HepG2 (cell line): ENCODE measurements at regions of chr17 and their contacts with region 1.

Region 1: DNA sequence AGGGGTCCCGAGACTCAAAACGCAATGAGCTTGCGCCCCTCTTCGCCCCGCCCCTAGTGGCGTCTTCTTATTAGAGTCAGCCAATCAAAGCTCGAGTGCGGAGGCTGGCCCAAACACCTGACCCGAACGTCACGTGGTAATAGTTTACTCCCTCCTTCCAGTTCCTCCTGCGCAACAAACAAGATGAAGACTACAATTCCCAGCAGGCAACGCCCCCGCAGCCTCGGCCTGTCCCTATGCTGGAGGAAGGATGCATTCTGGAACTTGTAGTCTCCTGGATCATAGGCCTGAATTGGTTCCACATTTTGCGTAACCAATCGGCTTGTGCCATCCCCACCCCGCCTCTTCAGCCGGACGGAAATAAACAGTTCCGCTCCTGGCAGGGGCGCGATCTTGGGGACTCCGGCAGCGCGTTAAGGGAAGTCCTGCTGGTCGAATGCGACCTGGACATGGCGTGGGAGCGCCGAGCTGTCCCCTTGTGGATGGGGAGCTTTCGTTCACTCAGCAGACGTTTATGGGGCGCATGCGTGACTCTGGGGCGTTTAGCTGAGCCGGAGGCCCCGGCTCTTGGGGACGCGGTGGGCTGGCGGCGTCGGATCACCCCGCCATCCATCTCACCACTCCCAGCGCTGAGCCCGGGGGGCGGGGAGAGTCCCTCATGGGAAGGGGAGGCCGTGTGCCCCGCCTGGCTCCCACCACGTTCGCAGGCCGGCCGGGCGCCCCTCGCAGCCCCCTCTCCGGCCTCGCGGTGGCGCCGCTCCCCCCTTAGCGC is at the start of gene WBP2:
- DNase-seq: peak; percentile 100
- ATAC-seq: peak; percentile 92
- H3K4me3 ChIP-seq: peak within 1 kb of the TSS; percentile 81 to 90 (median 90)
- H3K27ac ChIP-seq: peak within 1 kb of the TSS; percentile 89
- H3K4me1 ChIP-seq: peaks cover 53% of the 10 kb centered on the region
- H3K27me3 ChIP-seq: no peaks in the 10 kb centered on the region; a peak in 1 of 5 replicates
- CTCF ChIP-seq: peak; percentile 80
- EP300 ChIP-seq: peak in 1 of 2 experiments; percentile 63; a peak in 2 of 4 replicates
- POLR2A ChIP-seq: peak; percentile 89 to 99
- RAD21 ChIP-seq: peak; percentile 90
- total RNA-seq, gene WBP2: 28.2 and 29.2 TPM in 2 replicates

Region 2: GRCh38 chr17:74340470-74341023 is 1514.9 kb before region 1 on chr17:
- CTCF ChIA-PET with region 1: no interaction called
- POLR2A ChIA-PET with region 1: no interaction called
- in situ Hi-C with region 1: no loop called
- intact Hi-C with region 1: no loop called
- DNase-seq: peak; percentile 56
- ATAC-seq: peak; percentile 68
- H3K4me3 ChIP-seq: no peak overlapping the region
- H3K27ac ChIP-seq: no peak overlapping the region
- H3K4me1 ChIP-seq: peaks cover 10% of the 10 kb centered on the region
- H3K27me3 ChIP-seq: peaks cover 11 to 47% of the 10 kb centered on the region in 2 experiments; a peak in 4 of 5 replicates
- CTCF ChIP-seq: no peak
- EP300 ChIP-seq: no peak
- POLR2A ChIP-seq: no peak
- RAD21 ChIP-seq: no peak

Region 3: DNA sequence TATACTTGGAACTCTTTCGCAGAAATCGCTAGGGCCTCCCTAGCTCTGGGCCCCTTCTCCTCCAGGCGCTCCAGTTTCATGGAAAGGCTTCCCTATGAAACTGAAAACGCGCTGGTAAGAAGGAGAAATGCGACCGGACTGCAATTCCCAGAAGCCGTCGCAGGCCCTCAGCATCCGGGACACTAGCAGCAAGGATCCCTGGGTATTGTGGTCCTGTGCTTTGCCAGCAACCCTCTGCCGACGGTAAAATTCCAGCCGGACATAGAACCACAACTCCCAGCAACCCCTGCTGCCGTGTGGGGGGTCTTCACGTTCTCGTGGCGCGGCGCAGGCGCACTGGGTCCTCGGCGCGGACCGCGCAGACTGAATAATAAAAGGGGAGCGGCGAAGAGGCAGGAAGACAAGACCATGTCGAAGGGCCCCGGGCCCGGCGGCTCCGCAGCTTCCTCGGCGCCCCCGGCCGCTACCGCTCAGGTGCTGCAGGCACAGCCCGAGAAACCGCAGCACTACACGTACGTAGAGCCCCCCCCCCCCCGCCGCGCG is 71.0 kb before region 1 on chr17 and contains the start of gene UNK:
- CTCF ChIA-PET with region 1: no interaction called
- POLR2A ChIA-PET with region 1: interaction called, 132 read pairs
- in situ Hi-C with region 1: no loop called
- intact Hi-C with region 1: no loop called
- DNase-seq: peak; percentile 99
- ATAC-seq: peak; percentile 80
- H3K4me3 ChIP-seq: peak within 1 kb of the TSS; percentile 57 to 82 (median 81)
- H3K27ac ChIP-seq: peak within 1 kb of the TSS; percentile 93
- H3K4me1 ChIP-seq: peaks cover 64% of the 10 kb centered on the region
- H3K27me3 ChIP-seq: no peaks in the 10 kb centered on the region; a peak in 1 of 5 replicates
- CTCF ChIP-seq: 0 out of 2 replicates have a peak, but pooled peaks have one; percentile 11
- EP300 ChIP-seq: peak; percentile 62 to 68; a peak in 3 of 4 replicates
- POLR2A ChIP-seq: peak; percentile 63 to 82
- RAD21 ChIP-seq: peak; percentile 61
- total RNA-seq, gene UNK: 28.6 and 33.0 TPM in 2 replicates

Region 4: DNA sequence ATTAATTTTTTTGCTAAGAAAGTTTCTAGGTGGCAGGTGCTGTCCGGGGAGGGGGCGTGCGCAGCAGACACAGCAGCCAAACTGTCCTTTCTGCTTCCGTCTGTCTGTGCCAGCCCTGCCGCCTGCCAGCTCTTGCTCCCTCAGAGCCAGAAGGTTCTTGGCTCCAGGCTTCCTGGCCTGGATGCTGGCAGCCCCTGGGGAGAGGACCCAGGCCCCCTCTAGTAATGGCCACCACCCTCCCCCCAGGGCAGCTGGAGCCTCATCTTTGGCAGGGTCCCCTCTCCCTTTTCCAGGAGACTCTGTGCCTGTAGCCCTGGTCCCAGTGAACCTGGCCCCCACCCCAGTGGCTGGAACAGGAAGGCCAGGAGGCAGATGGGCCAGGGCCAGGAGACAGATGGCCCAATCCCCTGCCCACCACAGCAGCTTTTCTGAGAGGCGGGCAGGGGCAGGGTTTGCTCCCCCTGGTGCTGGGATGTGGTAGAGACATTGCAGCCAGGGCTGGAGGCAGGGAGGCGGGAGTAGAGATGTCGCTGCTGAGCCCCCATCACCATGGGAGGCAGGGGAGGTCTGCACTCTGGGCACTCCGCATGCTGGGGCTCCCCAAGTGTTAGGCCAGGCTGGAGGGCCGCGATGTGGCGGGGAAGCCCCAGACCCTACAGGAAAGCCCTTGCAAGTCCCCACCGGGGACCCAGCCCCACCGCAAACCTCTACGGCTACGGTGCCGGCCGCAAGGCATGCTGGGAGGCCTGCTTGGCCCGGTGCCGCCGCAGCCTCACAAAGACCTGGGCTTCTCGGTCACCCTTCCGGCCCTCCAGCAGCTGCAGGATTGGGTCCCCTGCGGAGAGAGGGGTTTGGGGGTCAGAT is 28.0 kb before region 1 on chr17:
- CTCF ChIA-PET with region 1: no interaction called
- POLR2A ChIA-PET with region 1: interaction called, 18 read pairs
- in situ Hi-C with region 1: no loop called
- intact Hi-C with region 1: no loop called
- DNase-seq: peak; percentile 50
- ATAC-seq: peak; percentile 73
- H3K4me3 ChIP-seq: no peak overlapping the region
- H3K27ac ChIP-seq: peak overlapping the region; percentile 61
- H3K4me1 ChIP-seq: peaks cover 22% of the 10 kb centered on the region
- H3K27me3 ChIP-seq: no peaks in the 10 kb centered on the region
- CTCF ChIP-seq: peak; percentile 87
- EP300 ChIP-seq: no peak
- POLR2A ChIP-seq: no peak
- RAD21 ChIP-seq: peak; percentile 74

Region 5: DNA sequence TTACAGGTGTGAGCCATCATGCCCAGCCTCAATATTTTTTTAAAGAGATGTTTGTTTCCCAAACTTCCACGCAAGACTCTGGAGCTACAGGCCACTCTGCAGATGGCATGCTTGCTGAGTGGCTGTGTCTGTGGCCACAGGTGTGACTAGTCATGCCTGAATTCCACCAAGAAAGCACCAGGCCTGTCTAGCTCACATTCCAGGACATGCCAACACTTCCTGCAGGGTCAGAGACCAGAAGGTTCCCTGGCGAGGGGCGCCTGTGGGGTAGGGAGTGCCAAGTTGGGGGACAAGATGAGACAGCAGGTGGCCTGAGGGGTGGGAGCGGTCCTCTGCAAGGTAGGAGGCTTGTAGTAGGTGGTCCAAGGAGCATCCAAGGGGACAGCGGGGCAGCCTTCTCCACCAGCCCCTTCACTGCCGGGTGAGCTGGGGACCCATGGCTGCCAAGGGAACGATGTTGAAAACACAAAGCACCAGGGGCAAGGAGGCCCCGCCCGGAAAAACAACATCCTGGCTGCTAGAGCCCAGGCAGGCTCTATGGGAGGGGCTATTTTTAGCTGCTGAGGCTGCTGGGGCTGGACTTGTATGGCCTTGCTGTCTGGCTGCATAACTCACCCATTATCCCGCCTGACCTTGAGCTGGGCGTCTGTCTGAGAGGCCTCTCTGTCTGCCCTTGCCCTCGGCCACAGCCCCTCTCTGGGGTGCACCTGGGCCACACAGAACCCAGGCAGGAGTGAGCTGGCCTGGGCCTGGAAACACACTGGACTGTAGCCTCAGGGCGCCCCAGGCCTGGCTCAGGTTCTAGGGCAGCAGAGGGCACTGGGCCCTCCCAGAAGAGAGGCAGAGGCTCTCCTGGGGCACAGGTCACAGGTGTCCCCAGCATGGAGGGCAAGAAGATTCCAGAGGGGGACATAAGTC is 17.2 kb after region 1 on chr17:
- CTCF ChIA-PET with region 1: interaction called, 3 read pairs
- POLR2A ChIA-PET with region 1: interaction called, 454 read pairs
- in situ Hi-C with region 1: no loop called
- intact Hi-C with region 1: loop called (anchors 2 kb)
- DNase-seq: peak; percentile 99
- ATAC-seq: peak; percentile 64
- H3K4me3 ChIP-seq: peak overlapping the region; percentile 13 to 62 (median 36); a peak in 5 of 6 replicates
- H3K27ac ChIP-seq: peak overlapping the region; percentile 97
- H3K4me1 ChIP-seq: peaks cover 88% of the 10 kb centered on the region
- H3K27me3 ChIP-seq: no peaks in the 10 kb centered on the region
- CTCF ChIP-seq: peak; percentile 43
- EP300 ChIP-seq: peak; percentile 81 to 87; a peak in 3 of 4 replicates
- POLR2A ChIP-seq: peak in 1 of 2 experiments; percentile 84; a peak in 2 of 4 replicates
- RAD21 ChIP-seq: peak; percentile 68

Region 6: DNA sequence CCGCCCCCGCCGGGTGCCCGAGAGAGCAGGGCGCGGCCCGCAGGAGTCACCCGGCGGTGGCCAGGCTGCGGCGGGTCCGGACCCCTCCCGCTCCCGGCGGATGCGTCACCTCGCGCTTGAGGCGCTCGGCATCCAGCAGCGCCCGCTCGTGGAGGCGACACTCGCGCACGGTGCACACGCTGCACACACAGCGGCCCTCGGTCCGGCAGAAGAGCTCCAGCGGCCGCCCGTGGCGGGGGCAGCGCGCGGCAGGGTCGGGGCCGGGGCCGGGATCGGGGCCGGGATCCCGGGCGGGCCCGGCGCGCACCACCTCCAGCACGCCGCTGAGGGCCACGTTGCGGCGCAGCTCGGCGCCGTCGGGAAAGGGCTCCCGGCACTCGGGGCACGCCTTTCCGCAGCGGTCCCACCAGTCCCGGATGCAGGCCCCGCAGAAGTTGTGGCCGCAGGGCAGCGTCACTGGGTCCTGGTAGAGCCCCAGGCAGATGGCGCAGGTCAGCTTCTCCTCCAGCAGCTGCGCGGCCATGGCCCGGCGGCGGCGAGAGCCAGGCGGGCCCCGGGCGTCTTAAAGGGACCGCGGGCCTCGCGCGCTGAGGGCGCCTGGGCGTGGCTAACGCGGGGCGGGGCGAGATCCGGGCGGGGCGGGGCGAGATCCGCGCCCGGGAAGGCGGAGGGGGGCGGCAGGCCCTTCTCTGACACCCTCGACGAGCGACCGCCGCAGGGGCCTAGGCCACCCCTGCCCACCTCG is 41.1 kb after region 1 on chr17 and contains the start of gene TRIM65:
- CTCF ChIA-PET with region 1: no interaction called
- POLR2A ChIA-PET with region 1: interaction called, 46 read pairs
- in situ Hi-C with region 1: no loop called
- intact Hi-C with region 1: loop called (anchors 5 kb)
- DNase-seq: peak; percentile 56
- ATAC-seq: peak; percentile 18
- H3K4me3 ChIP-seq: peak within 1 kb of the TSS; percentile 68 to 83 (median 75)
- H3K27ac ChIP-seq: peak within 1 kb of the TSS; percentile 79
- H3K4me1 ChIP-seq: peaks cover 46% of the 10 kb centered on the region
- H3K27me3 ChIP-seq: no peaks in the 10 kb centered on the region
- CTCF ChIP-seq: peak; percentile 64
- EP300 ChIP-seq: no peak
- POLR2A ChIP-seq: peak in 1 of 2 experiments; percentile 92; a peak in 2 of 4 replicates
- RAD21 ChIP-seq: peak; percentile 84
- total RNA-seq, gene TRIM65: 22.4 and 24.6 TPM in 2 replicates

Region 7: GRCh38 chr17:75950821-75951554 is 95.5 kb after region 1 on chr17:
- CTCF ChIA-PET with region 1: no interaction called
- POLR2A ChIA-PET with region 1: no interaction called
- in situ Hi-C with region 1: no loop called
- intact Hi-C with region 1: no loop called
- DNase-seq: no peak
- ATAC-seq: no peak
- H3K4me3 ChIP-seq: no peak overlapping the region
- H3K27ac ChIP-seq: no peak overlapping the region
- H3K4me1 ChIP-seq: no peaks in the 10 kb centered on the region
- H3K27me3 ChIP-seq: no peaks in the 10 kb centered on the region
- CTCF ChIP-seq: no peak
- EP300 ChIP-seq: no peak
- POLR2A ChIP-seq: 0 out of 4 replicates have a peak, but pooled peaks of 1 of the 2 experiments have one; percentile 18
- RAD21 ChIP-seq: no peak

Region 8: DNA sequence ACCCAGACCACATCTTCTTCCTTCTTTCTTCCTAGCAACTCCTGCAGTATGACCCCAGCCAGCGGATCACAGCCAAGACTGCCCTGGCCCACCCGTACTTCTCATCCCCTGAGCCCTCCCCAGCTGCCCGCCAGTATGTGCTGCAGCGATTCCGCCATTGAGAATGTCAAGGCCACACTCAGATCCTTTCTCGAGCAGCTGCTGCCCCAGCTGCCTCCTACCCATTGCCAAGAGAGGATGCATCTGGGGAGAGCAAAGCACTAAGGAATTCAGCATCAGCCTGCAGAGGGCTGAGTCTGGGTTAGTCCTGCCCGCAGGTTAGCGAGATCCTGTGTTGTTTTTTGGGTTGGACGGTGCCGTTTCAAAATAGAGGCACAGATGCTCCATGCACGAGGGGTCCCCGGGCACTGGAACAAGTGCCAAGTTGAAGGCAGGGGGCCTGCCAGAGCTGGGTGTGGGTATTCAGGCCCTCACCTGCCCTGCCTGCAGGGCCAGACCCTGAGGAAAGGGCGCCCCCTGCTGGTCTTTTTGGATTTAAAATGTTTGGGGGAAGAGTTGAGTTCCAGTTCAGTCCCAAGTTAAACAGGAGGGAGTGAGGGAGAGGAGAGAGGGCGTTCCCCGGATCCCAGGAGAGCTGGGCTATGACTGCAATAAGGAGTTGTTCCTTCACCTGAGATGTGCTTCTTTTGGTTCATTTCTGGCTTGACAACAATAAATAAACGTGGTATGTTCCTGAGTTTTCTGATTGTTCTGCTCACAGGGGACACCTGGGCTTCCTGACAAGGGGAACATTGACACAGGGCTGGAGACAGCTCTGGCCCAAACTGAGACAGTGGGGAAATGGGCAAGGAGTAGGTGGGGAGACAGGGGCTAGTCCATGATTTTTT is 150.0 kb after region 1 on chr17:
- CTCF ChIA-PET with region 1: no interaction called
- POLR2A ChIA-PET with region 1: interaction called, 11 read pairs
- in situ Hi-C with region 1: no loop called
- intact Hi-C with region 1: no loop called
- DNase-seq: peak; percentile 82
- ATAC-seq: peak; percentile 42
- H3K4me3 ChIP-seq: no peak overlapping the region
- H3K27ac ChIP-seq: peak overlapping the region; percentile 83
- H3K4me1 ChIP-seq: peaks cover 55% of the 10 kb centered on the region
- H3K27me3 ChIP-seq: no peaks in the 10 kb centered on the region
- CTCF ChIP-seq: peak; percentile 96
- EP300 ChIP-seq: no peak
- POLR2A ChIP-seq: no peak
- RAD21 ChIP-seq: peak; percentile 97

Region 9: GRCh38 chr17:76264755-76265596 is 409.5 kb after region 1 on chr17 and contains the start of gene UBALD2:
- CTCF ChIA-PET with region 1: no interaction called
- POLR2A ChIA-PET with region 1: no interaction called
- in situ Hi-C with region 1: no loop called
- intact Hi-C with region 1: no loop called
- DNase-seq: peak; percentile 98
- ATAC-seq: peak; percentile 96
- H3K4me3 ChIP-seq: peak within 1 kb of the TSS; percentile 88 to 98 (median 92)
- H3K27ac ChIP-seq: peak within 1 kb of the TSS; percentile 63
- H3K4me1 ChIP-seq: peaks cover 76% of the 10 kb centered on the region
- H3K27me3 ChIP-seq: no peaks in the 10 kb centered on the region
- CTCF ChIP-seq: no peak
- EP300 ChIP-seq: 0 out of 4 replicates have a peak, but pooled peaks have one; percentile 15 to 21
- POLR2A ChIP-seq: peak; percentile 55; a peak in 2 of 4 replicates
- RAD21 ChIP-seq: peak; percentile 15; the same call in 1 of the 2 replicates
- total RNA-seq, gene UBALD2: 3.3 and 5.3 TPM in 2 replicates